ENCODE measurements at regions of chr4 and their contacts with region 1.

Region 1: GRCh38 chr4:2755837-2756694 is at the start of gene TNIP2:
- DNase-seq: peak; percentile 90 to 95 (median 92)
- ATAC-seq: peak; percentile 69 to 94 (median 86)
- H3K4me3 ChIP-seq: peak within 1 kb of the TSS; percentile 62 to 99 (median 89)
- H3K27ac ChIP-seq: peak within 1 kb of the TSS; percentile 48 to 95 (median 88)
- H3K4me1 ChIP-seq: peaks cover 0 to 30% (median 13%) of the 10 kb centered on the region in 12 donors
- H3K27me3 ChIP-seq: no peaks in the 10 kb centered on the region
- CTCF ChIP-seq: peak in 10 of 12 donors; percentile 17 to 52 (median 38)
- POLR2A ChIP-seq: peak in 1 of 2 donors; percentile 80
- total RNA-seq, gene TNIP2: 12.6 to 94.5 (median 23.4) TPM

Region 2: GRCh38 chr4:2262143-2262943 is 493.7 kb before region 1 on chr4:
- intact Hi-C with region 1: loop called in 1 of 10 experiments (anchors 10 kb)
- DNase-seq: peak; percentile 99 to 100 (median 100)
- ATAC-seq: peak; percentile 94 to 95 (median 95)
- H3K4me3 ChIP-seq: peak overlapping the region; percentile 12 to 96 (median 86)
- H3K27ac ChIP-seq: peak overlapping the region; percentile 94 to 100 (median 98)
- H3K4me1 ChIP-seq: peaks cover 24 to 82% (median 62%) of the 10 kb centered on the region in 12 donors
- H3K27me3 ChIP-seq: no peaks in the 10 kb centered on the region
- CTCF ChIP-seq: no peak
- POLR2A ChIP-seq: peak; percentile 90 to 99

Region 3: GRCh38 chr4:2792711-2793585 is 36.9 kb after region 1 on chr4 and contains the start of gene SH3BP2:
- intact Hi-C with region 1: loop called in 1 of 10 experiments (anchors 5 kb)
- DNase-seq: peak; percentile 88 to 95 (median 92)
- ATAC-seq: peak in 3 of 4 donors; percentile 60 to 73 (median 63)
- H3K4me3 ChIP-seq: peak within 1 kb of the TSS; percentile 37 to 93 (median 78)
- H3K27ac ChIP-seq: peak within 1 kb of the TSS; percentile 39 to 96 (median 80)
- H3K4me1 ChIP-seq: peaks cover 36 to 82% (median 62%) of the 10 kb centered on the region in 12 donors
- H3K27me3 ChIP-seq: no peaks in the 10 kb centered on the region
- CTCF ChIP-seq: no peak
- POLR2A ChIP-seq: peak in 1 of 2 donors; percentile 37
- total RNA-seq, gene SH3BP2: 10.4 to 70.2 (median 23.5) TPM

Region 4: DNA sequence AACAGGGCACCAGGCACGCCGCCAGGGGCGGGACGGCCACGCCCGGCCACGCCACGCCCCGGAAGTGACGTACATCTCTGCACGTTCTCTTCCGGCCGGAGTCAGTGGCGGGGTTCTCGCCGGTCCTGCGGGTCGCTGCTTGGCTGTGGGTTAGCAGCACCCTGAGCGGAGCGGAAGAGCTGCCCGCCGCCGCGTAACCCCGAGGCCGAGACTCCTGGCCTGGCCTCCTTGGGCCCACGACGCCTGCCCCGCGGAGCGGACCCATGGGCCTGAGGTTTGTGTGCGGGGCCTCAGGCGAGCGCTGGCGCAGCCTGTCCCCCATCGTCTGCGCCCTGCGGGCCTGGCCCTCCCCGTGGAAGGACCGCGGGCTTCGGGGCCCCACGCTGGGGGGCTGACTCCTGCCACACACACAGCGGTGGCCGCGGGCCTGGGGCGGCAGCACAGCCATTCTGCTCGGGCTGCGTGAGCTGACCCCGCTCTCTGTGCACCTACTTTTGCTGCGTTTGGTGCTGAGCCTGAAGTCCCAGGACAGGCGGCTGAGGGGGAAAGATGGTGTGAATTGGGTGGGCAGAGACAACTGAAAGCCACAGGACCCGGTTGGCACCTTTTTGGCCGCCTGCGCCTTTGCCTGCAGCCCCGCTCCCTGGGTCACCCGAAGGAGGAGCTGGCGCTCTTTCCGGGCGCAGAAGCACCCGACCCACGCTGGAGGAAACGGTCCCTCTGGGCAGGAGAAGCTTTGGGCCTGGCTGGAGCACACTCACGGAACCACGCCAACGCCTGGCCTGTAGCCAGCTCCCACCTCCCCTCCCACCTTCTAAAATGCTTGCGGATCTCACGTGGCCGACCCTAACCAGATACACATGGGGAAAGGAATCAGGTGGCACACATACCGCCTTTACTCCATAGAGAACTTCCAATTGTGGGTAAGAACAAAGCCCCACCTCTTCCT is 179.0 kb after region 1 on chr4:
- intact Hi-C with region 1: loop called in 7 of 10 experiments (anchors 5 to 10 kb)
- DNase-seq: peak; percentile 94 to 98 (median 96)
- ATAC-seq: peak; percentile 54 to 84 (median 83)
- H3K4me3 ChIP-seq: peak overlapping the region; percentile 76 to 100 (median 89)
- H3K27ac ChIP-seq: peak overlapping the region; percentile 68 to 96 (median 88)
- H3K4me1 ChIP-seq: peaks cover 2 to 63% (median 42%) of the 10 kb centered on the region in 12 donors
- H3K27me3 ChIP-seq: no peaks in the 10 kb centered on the region
- CTCF ChIP-seq: peak in 2 of 12 donors; percentile 1 to 26
- POLR2A ChIP-seq: peak; percentile 24 to 92

Region 5: DNA sequence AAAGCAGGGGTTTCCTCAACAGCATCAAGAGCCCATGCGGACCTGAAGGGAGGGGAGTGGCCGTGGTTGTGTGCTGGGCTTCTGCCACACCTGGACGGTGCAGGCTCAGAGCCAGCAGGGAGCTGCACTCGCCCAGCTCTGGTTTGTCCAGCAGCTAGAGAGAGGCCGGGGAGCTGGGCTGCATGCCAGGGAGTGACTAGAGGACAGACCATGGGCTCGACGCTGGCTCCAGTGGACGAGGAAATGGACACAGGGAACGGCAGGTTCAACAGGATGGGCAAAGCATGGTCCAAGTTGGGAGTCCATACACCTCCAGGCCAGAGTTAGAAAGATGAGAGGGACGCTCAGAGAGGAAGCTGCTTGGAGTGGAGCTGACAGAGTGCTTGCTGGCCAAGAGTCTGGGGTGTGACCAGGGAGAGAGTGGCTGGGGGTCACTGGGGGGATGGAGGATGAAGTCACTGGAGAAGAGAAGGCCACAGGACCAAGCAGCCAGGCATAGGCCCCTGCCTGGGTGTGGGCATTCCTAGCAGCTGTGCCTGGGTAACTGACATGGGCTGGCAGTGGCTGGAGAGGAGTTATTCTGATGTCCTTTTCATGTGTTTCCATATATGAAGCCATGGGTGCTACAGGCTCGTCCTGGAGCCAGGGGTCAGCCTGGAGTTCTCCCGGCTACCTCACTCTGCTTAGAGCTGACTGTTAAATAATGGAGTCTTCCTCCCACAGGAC is 275.5 kb after region 1 on chr4:
- intact Hi-C with region 1: loop called in 5 of 10 experiments (anchors 2 to 10 kb)
- DNase-seq: peak in 1 of 5 donors; percentile 48
- ATAC-seq: peak in 2 of 4 donors; percentile 32 to 33
- H3K4me3 ChIP-seq: no peak overlapping the region
- H3K27ac ChIP-seq: no peak overlapping the region
- H3K4me1 ChIP-seq: no peaks in the 10 kb centered on the region
- H3K27me3 ChIP-seq: no peaks in the 10 kb centered on the region
- CTCF ChIP-seq: no peak
- POLR2A ChIP-seq: no peak